Colonic mucosa (tissue), 4 donors: ENCODE measurements at regions of chr18 and their contacts with region 1.

Region 1: DNA sequence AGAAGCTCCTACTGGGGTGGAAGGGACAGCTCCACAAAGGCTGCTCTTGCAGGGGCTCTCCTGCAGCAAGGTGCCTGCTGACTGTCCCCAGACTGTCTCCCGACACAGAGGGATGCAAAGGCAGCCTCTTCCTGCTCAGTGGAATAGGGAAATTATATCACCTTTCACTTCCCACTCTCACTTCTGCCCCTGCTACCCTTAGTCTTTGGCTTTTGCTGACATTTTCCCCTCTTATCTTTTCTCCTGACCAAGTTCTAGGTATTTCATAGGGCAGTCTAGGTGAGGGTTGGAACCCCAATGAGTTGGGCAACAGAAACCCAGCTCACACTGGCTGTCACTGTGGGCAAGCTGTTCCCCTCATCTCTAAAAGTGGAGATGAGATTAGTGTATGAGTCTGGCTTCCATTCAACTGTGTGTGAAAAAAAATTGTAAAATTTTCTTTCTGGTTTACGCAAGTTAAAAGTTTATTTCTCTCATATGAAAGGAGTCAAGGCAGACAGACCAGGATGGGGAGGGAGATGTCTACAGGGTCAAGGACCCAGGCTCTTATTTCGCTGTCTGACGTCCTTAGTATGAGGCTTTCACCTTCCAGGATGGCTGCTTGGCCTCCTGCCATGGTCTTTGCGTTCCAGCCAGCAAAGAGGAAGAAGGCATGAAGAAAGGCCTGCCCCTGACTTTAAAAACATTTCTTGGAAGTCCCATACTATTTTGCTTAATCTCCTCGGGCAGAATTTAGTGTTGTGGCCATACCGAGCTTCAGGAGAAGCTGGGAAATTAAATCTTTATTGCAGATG is 7.5 kb upstream of the MOCOS start:
- DNase-seq: peak; percentile 63
- H3K4me3 ChIP-seq: no peak overlapping the region
- H3K27ac ChIP-seq: no peak overlapping the region
- H3K4me1 ChIP-seq: peaks cover 5% of the 10 kb centered on the region
- H3K27me3 ChIP-seq: no peaks in the 10 kb centered on the region
- CTCF ChIP-seq: no peak

Region 2: DNA sequence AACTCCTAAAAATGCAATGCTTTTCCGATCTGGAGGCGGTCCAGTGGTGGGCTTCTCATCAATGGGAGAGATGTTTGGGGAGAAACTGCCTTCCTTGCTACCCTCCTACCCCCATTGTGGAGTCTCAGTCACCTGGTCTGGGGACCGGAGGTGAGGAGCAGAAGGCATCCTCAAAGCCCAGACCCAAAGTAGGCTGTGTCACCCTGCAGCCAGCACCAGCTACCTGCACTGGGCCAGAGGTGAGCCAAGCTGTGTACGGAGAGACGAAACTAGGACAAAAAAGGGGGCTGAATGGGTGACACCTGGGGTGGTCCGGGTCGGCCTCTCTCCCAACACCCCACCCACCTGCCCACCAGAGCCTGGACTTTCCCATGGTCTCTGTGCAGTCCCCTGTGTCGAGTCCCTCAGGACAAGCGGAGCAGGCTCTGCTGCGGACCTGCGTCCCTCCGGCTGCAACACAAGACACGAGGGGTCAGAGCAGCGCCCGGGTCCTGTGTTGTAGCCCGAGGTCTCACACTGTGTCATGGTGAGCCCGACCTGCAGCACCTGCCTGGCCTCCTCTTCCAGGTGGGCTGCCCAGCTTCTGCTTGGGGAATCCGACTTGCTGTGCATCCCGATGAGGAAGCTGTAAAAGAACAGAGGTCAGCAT is 275.2 kb before region 1 on chr18:
- intact Hi-C with region 1: no loop called
- DNase-seq: no peak
- H3K4me3 ChIP-seq: no peak overlapping the region
- H3K27ac ChIP-seq: no peak overlapping the region
- H3K4me1 ChIP-seq: no peaks in the 10 kb centered on the region
- H3K27me3 ChIP-seq: no peaks in the 10 kb centered on the region
- CTCF ChIP-seq: no peak

Region 3: DNA sequence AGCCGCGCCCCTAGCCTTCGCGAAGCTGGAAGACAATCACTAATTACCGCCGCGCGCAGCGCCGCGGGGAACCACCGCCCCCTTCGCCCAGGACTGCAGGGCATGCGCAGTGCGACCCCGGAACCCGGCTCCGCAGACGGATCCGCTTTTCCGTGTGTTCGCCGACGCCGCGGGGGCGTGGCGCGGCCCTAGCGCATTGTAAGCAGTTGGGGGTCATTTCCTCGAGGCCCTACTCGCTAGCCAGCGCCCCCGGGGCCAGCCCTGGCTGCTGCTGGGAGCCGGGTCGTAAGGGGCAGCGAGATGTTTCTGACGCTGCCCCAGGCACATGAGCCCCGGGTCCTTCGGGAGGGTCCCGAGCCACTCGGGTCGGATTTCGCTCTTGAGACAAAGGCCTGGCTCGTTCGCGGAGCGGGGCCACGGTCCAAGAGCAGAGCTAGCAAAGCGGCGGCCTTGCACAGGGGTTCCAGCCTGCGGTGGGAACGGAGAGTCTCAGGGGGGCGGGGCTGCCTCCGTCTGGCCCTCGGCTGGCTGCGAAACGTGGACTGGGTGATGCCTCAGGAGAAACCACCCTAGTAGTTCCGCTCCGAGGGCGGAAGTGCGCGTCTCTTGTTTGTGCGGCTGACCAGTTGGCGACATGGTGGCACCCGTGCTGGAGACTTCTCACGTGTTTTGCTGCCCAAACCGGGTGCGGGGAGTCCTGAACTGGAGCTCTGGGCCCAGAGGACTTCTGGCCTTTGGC is 50.3 kb before region 1 on chr18 and contains the starts of genes ELP2 and SLC39A6:
- intact Hi-C with region 1: loop called (anchors 5 kb)
- DNase-seq: peak; percentile 97
- H3K4me3 ChIP-seq: peak within 1 kb of the TSS; percentile 91
- H3K27ac ChIP-seq: peak within 1 kb of the TSS; percentile 96
- H3K4me1 ChIP-seq: peaks cover 7% of the 10 kb centered on the region
- H3K27me3 ChIP-seq: no peaks in the 10 kb centered on the region
- CTCF ChIP-seq: no peak
- total RNA-seq, gene ELP2: 48.3 to 51.6 TPM
- total RNA-seq, gene SLC39A6: 9.9 to 15.3 TPM